ENCODE measurements at regions of chr9 and their contacts with region 1.

Region 1: GRCh38 chr9:112361601-112362000 is 18.3 kb upstream of the HSDL2 start:
- DNase-seq: no peak
- H3K4me3 Mint-ChIP-seq: no peak overlapping the region
- H3K27ac Mint-ChIP-seq: no peak overlapping the region
- H3K4me1 Mint-ChIP-seq: peaks cover 10% of the 10 kb centered on the region
- H3K27me3 Mint-ChIP-seq: peaks cover 8% of the 10 kb centered on the region

Region 2: DNA sequence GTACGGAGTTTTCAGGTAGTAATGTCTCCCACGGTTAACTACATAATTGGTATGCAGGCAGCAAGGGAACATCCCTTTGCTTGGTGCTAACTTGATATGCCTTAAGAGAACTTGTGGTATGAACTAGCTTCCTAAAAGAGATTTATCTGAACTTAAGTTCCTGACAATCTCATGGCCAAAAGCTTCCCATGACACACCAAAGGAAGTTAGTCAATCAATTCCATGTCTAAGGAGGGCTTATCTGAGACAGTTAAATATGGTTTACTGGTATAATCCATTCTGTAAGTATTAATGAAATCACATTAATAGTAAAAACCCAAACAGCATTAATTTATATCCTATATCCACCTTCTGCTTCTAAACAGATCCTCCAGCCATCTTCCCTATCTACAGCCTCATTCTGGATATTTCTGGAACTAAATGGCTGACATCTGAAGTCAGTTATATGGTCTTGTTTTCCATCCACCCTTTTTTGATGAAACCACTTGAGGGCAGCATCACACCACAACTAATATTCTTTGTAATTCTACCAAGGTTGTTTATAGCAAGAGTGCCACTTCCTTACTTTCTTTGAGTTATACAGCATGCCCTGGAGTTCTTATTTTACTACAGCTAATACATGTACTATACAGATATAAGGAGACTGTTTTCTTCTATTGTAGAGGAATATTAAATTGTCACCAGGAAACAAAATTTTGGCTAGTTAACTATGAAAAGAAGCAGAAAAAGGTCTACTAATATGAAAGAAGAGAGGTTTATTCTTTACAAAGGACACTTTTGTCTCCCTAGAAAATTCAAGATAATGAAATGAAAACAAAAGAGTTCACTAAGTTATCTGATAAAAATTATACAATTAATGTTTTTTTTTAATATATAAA is 601.6 kb before region 1 on chr9:
- intact Hi-C with region 1: loop called (anchors 5 kb)
- DNase-seq: no peak
- H3K4me3 Mint-ChIP-seq: no peak overlapping the region
- H3K27ac Mint-ChIP-seq: no peak overlapping the region
- H3K4me1 Mint-ChIP-seq: peaks cover 3% of the 10 kb centered on the region
- H3K27me3 Mint-ChIP-seq: no peaks in the 10 kb centered on the region

Region 3: DNA sequence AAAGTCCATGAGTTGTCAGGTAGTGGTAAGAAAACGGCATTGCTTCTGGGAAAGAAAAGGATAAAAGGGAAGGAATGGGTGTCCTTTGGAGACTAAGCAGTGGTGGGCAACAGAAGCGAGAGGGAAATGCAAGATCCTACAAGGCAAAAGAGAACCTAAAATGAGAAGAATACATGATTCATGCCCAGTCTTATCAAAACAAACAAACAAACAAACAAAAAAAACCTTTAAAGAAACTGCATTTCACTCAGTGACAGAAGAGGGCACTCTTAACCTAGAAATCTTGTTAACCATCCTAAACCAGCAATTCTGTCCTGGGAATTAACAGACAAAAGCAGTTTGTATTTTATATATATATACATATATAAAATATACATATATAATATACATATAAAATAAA is 275.0 kb before region 1 on chr9:
- intact Hi-C with region 1: loop called (anchors 2 kb)
- DNase-seq: no peak
- H3K4me3 Mint-ChIP-seq: no peak overlapping the region
- H3K27ac Mint-ChIP-seq: no peak overlapping the region
- H3K4me1 Mint-ChIP-seq: no peaks in the 10 kb centered on the region
- H3K27me3 Mint-ChIP-seq: no peaks in the 10 kb centered on the region

Region 4: DNA sequence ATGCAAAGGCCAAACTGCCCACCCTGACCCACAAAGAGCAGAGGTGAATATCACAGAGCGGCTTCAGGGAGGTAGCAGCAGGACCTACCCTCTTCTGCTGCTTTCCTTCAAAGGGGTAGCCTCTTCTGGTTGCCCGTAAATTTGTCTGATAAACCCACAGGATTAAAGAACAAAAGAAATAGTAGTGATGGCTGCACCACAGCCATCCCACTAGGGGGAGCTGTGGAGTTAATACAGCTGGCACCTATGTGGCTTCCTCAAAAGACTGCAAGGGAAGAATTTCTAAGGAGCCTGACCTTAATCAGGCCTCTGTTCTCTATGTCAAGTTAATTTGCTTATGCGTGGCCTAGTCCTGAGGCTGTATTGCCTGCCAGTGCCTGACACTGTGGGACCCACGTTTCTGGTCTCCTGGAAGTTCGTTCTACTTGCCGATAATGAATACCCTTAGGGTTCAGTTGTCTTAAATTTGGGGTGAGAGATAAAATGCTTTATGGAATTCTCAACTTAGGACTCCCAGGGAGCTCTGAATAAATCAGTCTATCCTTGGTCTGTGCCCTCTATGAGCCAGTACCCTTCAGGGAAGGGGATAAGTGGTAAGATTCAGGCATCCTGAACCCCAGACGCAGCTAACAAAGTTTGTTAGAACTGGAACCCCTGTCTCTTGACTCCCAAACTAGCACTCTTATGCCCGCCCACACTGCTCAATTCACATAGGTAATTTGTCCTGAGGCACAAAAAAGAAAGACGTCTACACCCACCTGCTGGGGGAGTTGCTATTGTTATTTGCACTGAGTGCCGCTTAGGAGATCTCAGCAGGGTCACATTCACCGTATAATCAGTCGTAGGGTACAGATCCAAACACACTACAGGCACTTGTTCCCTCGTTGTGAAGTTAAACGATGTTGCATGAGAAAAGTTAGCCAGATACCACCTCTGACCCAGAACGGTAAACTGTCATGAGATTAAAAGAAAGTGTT is 263.6 kb before region 1 on chr9:
- intact Hi-C with region 1: loop called (anchors 1 kb)
- DNase-seq: peak; percentile 59
- H3K4me3 Mint-ChIP-seq: no peak overlapping the region
- H3K27ac Mint-ChIP-seq: no peak overlapping the region
- H3K4me1 Mint-ChIP-seq: peaks cover 27% of the 10 kb centered on the region
- H3K27me3 Mint-ChIP-seq: no peaks in the 10 kb centered on the region